HEK293 (cell line): ENCODE measurements at regions of chr12 and their contacts with region 1.

Region 1: GRCh38 chr12:66860752-66861750 is 182.2 kb upstream of the GRIP1 start:
- H3K4me3 ChIP-seq: no peak overlapping the region
- H3K27ac ChIP-seq: no peak overlapping the region
- H3K4me1 ChIP-seq: no peaks in the 10 kb centered on the region
- CTCF ChIP-seq: peak; percentile 77

Region 2: DNA sequence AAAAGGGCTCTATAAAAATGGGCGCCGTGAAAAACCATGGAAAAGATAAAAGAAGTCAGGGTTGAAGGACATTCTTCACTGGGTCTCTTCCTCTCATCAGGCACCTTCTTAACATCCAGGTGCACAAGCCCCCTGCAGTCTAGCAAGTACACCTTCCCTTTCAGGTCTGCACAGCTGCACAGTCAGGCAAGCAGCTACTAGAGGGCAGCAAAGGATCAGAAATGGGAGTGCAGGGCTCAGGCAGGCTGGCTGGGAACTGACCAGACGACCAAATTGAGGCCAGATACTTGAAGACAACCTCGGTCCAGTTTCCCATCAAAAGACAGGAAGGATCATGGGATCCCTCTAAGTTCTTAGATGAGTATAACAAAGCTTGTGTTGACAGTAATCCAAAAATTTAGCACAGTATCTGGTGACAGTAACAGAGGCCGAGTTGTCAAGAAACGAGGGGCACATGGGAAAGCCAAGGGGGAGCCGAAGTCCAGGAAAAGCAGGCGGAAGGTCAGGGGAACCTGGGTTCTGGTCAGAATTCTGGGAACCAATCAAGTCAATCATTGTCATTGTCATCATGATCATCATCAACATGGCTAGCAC is 172.1 kb before region 1 on chr12:
- CTCF ChIA-PET with region 1: interaction called, 12 read pairs
- POLR2A ChIA-PET with region 1: no interaction called
- H3K4me3 ChIP-seq: no peak overlapping the region
- H3K27ac ChIP-seq: no peak overlapping the region
- H3K4me1 ChIP-seq: no peaks in the 10 kb centered on the region
- CTCF ChIP-seq: peak; percentile 87

Region 3: DNA sequence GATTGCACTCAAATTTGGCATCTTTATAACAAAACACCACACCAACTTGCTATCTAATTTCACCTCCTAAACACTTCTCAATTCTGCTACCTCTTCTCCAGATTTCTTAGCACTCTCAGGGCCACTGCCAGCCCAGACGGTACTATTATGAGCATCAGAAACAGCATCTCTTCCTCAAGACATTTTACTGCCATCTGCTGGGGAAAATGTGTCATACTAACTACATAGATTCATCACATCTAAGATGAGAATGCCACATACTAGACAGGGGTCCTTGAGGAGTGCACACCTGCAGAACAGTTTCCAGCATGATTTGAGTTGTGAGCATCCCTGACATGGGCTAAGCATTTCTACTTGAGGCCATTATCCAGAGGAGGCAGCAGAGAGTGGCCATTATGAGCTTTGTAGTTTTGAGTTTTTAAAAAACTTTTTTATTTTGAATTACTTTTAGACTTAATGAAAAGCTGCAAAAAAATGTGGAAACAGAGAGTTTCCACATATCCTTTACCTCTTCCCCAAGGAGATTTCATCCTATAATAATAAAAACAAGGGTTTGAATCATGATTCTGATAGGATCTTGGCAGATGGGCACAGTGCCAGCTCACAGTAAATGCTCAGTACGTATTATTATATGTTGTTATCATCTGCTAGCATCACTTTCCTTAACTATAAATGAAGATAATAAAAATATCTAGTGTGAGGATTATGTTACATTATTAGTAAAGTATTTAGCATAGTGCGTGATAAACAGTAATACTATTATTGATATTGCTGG is 167.0 kb before region 1 on chr12:
- CTCF ChIA-PET with region 1: interaction called, 12 read pairs
- POLR2A ChIA-PET with region 1: no interaction called
- H3K4me3 ChIP-seq: no peak overlapping the region
- H3K27ac ChIP-seq: no peak overlapping the region
- H3K4me1 ChIP-seq: no peaks in the 10 kb centered on the region; the same call in 1 of the 2 replicates
- CTCF ChIP-seq: peak; percentile 49; the same call in 1 of the 2 replicates

Region 4: GRCh38 chr12:66879409-66879808 is 18.4 kb after region 1 on chr12:
- CTCF ChIA-PET with region 1: interaction called, 26 read pairs
- POLR2A ChIA-PET with region 1: no interaction called
- H3K4me3 ChIP-seq: no peak overlapping the region
- H3K27ac ChIP-seq: no peak overlapping the region
- H3K4me1 ChIP-seq: peaks cover 6% of the 10 kb centered on the region; the same call in 1 of the 2 replicates
- CTCF ChIP-seq: no peak